ENCODE measurements at regions of chr6 and their contacts with region 1.

Region 1: DNA sequence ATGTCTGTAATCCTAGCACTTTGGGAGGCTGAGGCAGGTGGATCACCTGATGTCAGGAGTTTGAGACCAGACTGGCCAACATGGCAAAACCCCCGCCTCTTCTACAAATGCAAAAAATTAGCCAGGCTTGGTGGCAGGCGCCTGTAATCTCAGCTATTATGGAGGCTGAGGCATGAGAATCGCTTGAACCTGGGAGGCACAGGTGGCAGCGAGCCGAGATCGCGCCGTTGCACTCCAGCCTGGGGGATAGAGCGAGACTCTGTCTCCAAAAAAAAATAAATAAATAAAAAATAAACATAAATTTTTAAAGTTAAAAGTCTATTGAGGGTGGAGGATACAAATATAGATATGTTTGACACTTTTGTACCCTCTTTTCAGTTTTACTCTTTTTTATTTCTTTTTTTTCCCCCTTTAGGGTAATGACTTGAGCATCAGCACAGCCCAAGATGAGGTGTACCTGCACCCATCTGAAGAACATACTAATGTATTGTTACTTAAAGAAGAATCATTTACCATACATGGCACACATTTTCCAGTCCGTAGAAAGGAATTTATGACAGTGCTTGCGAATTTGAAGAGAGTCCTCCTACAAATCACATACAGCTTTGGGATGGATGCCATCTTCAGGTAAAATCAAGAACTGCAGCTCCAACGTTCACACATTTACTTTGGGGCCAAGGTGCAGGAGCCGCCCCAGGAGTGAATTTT is 368.9 kb downstream of the LAMA2 start:
- DNase-seq: peak in 7 of 9 donors; percentile 1 to 35 (median 25)
- ATAC-seq: peak; percentile 59
- H3K4me3 ChIP-seq: no peak overlapping the region
- H3K4me3 Mint-ChIP-seq: no peak overlapping the region
- H3K27ac ChIP-seq: no peak overlapping the region
- H3K27ac Mint-ChIP-seq: no peak overlapping the region
- H3K4me1 ChIP-seq: no peaks in the 10 kb centered on the region
- H3K4me1 Mint-ChIP-seq: peaks cover 0 to 8% (median 0%) of the 10 kb centered on the region in 7 donors
- H3K27me3 ChIP-seq: no peaks in the 10 kb centered on the region
- H3K27me3 Mint-ChIP-seq: peaks cover 11 to 43% (median 29%) of the 10 kb centered on the region in 5 donors

Region 2: DNA sequence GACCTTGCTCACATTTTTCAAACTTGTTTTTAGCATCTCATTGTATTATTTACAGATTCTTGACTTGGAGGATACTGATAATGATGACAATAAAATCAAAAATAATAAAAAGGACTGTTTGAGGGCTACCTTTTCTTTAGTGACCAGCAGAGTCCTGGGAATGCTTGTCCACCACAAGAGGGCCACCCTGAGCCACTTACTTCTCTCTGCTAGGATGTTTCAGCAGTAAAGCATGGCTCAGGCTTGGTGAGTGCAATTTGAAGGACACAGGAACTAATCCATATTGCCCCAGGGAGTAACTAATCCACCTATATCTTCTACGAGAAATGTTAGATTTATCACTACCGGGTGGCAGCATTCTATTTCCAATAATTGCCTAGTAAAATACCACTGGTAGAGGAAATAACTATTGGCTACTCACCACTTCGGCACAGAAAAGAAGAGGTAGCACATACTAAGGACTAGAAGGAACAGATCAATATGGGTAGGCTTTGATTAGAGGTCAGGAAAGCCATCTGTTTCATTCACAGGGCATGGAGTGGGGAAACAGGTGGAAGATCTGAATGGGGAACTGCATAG is 1786.9 kb before region 1 on chr6:
- CTCF ChIA-PET with region 1: no interaction called
- POLR2A ChIA-PET with region 1: no interaction called
- intact Hi-C with region 1: loop called in 1 of 2 experiments (anchors 5 kb)
- DNase-seq: peak; percentile 11 to 53 (median 39)
- ATAC-seq: peak; percentile 83
- H3K4me3 ChIP-seq: no peak overlapping the region
- H3K4me3 Mint-ChIP-seq: no peak overlapping the region
- H3K27ac ChIP-seq: no peak overlapping the region
- H3K27ac Mint-ChIP-seq: no peak overlapping the region
- H3K4me1 ChIP-seq: no peaks in the 10 kb centered on the region
- H3K4me1 Mint-ChIP-seq: peaks cover 0 to 13% (median 0%) of the 10 kb centered on the region in 7 donors
- H3K27me3 ChIP-seq: no peaks in the 10 kb centered on the region
- H3K27me3 Mint-ChIP-seq: no peaks in the 10 kb centered on the region

Region 3: GRCh38 chr6:128725271-128726233 is 526.3 kb before region 1 on chr6:
- CTCF ChIA-PET with region 1: no interaction called
- POLR2A ChIA-PET with region 1: no interaction called
- intact Hi-C with region 1: loop called (anchors 1 kb)
- DNase-seq: peak in 3 of 9 donors; percentile 4 to 7 (median 7)
- ATAC-seq: no peak
- H3K4me3 ChIP-seq: no peak overlapping the region
- H3K4me3 Mint-ChIP-seq: no peak overlapping the region
- H3K27ac ChIP-seq: no peak overlapping the region
- H3K27ac Mint-ChIP-seq: no peak overlapping the region
- H3K4me1 ChIP-seq: no peaks in the 10 kb centered on the region
- H3K4me1 Mint-ChIP-seq: no peaks in the 10 kb centered on the region
- H3K27me3 ChIP-seq: no peaks in the 10 kb centered on the region
- H3K27me3 Mint-ChIP-seq: peaks cover 9 to 28% (median 21%) of the 10 kb centered on the region in 5 donors

Region 4: DNA sequence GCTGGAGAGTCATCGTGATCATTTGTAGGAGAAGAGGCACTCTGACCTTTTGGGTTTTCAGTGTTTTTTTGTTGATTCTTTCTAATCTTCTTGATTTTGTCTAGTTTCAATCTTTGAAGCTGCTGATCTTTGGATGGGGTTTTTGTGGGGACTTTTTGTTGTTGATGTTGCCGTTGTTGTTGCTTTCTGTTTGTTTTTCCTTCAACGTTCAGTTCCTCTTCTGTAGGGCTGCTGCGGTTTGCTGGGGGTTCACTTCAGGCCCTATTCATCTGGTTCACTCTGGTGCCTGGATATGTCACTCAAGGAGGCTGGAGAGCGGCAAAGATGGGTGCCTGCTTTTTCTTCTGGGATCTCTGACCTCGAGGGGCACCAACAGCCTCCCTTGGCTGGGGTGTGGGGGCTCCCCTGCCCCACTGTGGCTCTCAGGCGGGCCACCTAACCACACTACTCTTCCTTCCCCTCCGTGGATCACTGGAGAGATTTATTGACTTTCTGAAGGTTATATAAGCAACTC is 630.7 kb after region 1 on chr6:
- CTCF ChIA-PET with region 1: no interaction called
- POLR2A ChIA-PET with region 1: no interaction called
- intact Hi-C with region 1: no loop called
- DNase-seq: no peak
- ATAC-seq: peak; percentile 22
- H3K4me3 ChIP-seq: no peak overlapping the region
- H3K4me3 Mint-ChIP-seq: peak overlapping the region in 1 of 10 donors; percentile 49
- H3K27ac ChIP-seq: no peak overlapping the region
- H3K27ac Mint-ChIP-seq: peak overlapping the region in 1 of 9 donors; percentile 79
- H3K4me1 ChIP-seq: no peaks in the 10 kb centered on the region
- H3K4me1 Mint-ChIP-seq: peaks cover 0 to 12% (median 0%) of the 10 kb centered on the region in 7 donors
- H3K27me3 ChIP-seq: no peaks in the 10 kb centered on the region
- H3K27me3 Mint-ChIP-seq: peaks cover 0 to 14% (median 3%) of the 10 kb centered on the region in 5 donors